ENCODE measurements at regions of chr1 and their contacts with region 1.

Region 1: DNA sequence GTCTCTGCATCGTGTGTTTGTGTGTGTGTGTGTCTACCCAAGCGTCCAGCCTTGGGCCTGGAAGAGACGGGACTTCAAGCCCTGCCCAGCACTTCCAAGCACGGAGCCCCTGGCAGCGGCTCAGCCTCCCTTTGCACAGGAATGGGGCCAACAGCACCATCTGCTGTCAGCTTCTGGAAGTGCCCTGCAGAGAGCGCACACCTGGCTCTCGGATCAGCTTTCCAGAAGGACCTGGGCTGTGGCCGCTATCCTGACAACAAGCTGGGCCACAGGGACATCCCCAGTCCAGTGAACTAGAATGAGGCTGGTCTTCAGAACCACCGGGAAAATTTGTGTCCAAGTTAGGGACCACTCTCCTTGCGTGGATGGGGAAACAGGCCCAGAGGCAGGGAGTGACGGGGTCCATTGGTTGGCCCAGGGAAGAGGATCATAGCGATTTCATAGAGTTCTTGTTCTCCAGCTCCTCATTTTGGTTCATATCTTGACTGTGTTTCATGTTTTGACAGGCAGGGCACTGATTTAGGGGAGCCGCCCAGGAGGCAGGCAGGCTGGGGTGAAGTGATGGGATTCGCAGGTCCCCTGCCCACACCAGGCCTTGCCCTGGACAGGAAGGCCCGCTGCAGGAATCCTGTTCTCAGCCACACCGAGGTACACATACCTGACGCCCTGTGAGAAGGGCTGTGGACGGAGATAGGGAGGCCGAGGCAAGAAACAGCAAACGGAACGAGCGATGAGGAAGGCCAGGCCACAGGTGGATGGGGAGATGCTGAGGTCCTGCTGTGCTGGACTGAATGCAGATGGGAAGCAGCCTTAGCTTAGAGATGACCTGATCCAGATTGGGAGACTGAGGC is 38.4 kb downstream of the TAS1R2 start:
- DNase-seq: peak; percentile 76 to 82 (median 76)
- ATAC-seq: peak; percentile 91 to 98 (median 95)
- H3K4me3 ChIP-seq: no peak overlapping the region
- H3K27ac ChIP-seq: no peak overlapping the region
- H3K4me1 ChIP-seq: no peaks in the 10 kb centered on the region
- H3K27me3 ChIP-seq: no peaks in the 10 kb centered on the region
- CTCF ChIP-seq: peak; percentile 80 to 93 (median 90)
- POLR2A ChIP-seq: no peak

Region 2: DNA sequence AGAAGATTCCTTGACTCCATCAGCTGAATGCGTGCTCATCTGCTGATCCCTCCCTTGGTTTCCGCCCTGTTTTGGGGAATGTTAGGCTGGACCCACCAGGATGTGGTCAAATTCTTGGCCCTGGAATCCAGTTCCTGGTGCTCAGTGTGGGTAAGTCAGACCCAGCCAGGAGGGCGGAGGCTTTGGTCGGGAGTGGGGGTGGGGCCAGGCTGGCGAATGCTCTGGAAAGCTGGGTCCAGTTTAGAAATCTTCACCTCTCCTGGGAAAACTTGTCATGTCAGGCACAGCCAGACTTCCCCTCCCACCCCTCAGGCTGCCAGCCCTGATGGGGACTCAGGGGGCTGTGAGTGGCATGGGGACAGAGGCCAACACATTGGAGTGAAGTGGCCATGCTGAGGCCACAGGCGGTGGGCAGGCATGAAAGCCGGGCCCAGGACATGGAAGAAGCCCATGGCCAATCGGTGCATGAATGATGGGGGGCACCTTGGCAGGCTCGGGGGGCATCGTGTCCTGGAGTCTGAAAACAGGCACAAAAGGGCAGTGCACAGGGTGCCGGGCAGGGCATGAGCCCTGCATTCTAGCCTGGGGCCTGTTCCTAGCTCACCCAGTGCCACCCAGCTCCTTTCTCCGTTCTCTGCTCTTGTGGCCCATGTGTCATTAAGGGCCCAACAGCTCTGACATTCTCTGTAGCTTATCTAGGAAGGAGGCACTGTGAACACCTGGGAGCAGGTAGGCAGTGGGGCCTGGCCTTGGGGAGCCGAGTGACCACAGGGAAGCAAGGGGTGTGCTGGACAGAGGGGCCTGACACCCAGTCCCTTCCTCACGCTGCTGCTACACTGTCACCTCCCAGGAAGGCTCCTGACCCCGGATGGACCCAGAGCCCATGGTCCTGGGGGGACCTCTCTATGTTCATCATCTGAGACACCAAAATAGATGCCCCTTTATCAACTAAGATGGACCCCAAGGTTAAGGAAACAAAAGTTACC is 1630.7 kb before region 1 on chr1:
- intact Hi-C with region 1: loop called in 1 of 2 experiments (anchors 10 kb)
- DNase-seq: peak in 1 of 3 donors; percentile 33
- ATAC-seq: no peak
- H3K4me3 ChIP-seq: no peak overlapping the region
- H3K27ac ChIP-seq: no peak overlapping the region
- H3K4me1 ChIP-seq: no peaks in the 10 kb centered on the region
- H3K27me3 ChIP-seq: no peaks in the 10 kb centered on the region
- CTCF ChIP-seq: no peak
- POLR2A ChIP-seq: no peak

Region 3: GRCh38 chr1:18597160-18598042 is 223.6 kb before region 1 on chr1:
- intact Hi-C with region 1: loop called (anchors 5 to 10 kb)
- DNase-seq: peak; percentile 58 to 66 (median 59)
- ATAC-seq: peak; percentile 88 to 93 (median 89)
- H3K4me3 ChIP-seq: no peak overlapping the region
- H3K27ac ChIP-seq: no peak overlapping the region
- H3K4me1 ChIP-seq: no peaks in the 10 kb centered on the region
- H3K27me3 ChIP-seq: no peaks in the 10 kb centered on the region
- CTCF ChIP-seq: peak; percentile 90 to 96 (median 92)
- POLR2A ChIP-seq: no peak

Region 4: DNA sequence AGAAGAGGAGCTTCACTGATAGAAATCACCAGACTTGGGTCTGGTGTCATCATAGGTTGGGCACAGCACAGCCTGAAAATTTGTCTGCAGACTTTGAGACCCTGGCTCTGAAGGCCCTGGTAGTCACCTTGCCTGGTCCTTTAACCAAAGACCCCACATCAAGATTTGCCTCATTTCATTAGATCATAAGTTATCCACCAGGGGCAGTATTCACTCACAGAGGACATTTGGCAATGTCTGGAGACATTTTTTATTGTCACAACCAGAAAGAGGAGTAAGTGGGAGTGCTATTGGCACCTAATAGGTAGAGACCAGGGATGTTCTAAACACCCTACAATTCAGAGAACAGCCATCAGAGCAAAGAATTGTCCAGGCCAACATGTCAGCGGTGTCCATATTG is 212.5 kb before region 1 on chr1:
- intact Hi-C with region 1: loop called in 1 of 2 experiments (anchors 10 kb)
- DNase-seq: no peak
- ATAC-seq: no peak
- H3K4me3 ChIP-seq: no peak overlapping the region
- H3K27ac ChIP-seq: no peak overlapping the region
- H3K4me1 ChIP-seq: no peaks in the 10 kb centered on the region
- H3K27me3 ChIP-seq: no peaks in the 10 kb centered on the region
- CTCF ChIP-seq: peak in 1 of 4 donors; percentile 6
- POLR2A ChIP-seq: no peak

Region 5: GRCh38 chr1:18875107-18875795 is 54.2 kb after region 1 on chr1:
- intact Hi-C with region 1: no loop called
- DNase-seq: peak; percentile 63 to 78 (median 75)
- ATAC-seq: peak; percentile 59 to 66 (median 63)
- H3K4me3 ChIP-seq: no peak overlapping the region
- H3K27ac ChIP-seq: no peak overlapping the region
- H3K4me1 ChIP-seq: peaks cover 0 to 9% (median 0%) of the 10 kb centered on the region in 4 donors
- H3K27me3 ChIP-seq: no peaks in the 10 kb centered on the region
- CTCF ChIP-seq: peak; percentile 59 to 72 (median 70)
- POLR2A ChIP-seq: no peak

Measured in right lobe of liver (tissue), 6 donors.